ENCODE measurements at regions of chr20 and their contacts with region 1.

Region 1: GRCh38 chr20:32406701-32407100 is 48.6 kb downstream of the ASXL1 start:
- DNase-seq: no peak
- ATAC-seq: no peak
- H3K4me3 Mint-ChIP-seq: peak overlapping the region; percentile 48 to 89 (median 83)
- H3K27ac Mint-ChIP-seq: peak overlapping the region; percentile 80 to 98 (median 95)
- H3K4me1 Mint-ChIP-seq: peaks cover 26 to 70% (median 59%) of the 10 kb centered on the region in 4 donors
- H3K27me3 Mint-ChIP-seq: no peaks in the 10 kb centered on the region

Region 2: GRCh38 chr20:32357869-32358631 is 48.7 kb before region 1 on chr20 and contains the start of gene ASXL1:
- POLR2A ChIA-PET with region 1: interaction called, 23 read pairs
- DNase-seq: peak; percentile 86 to 95 (median 92)
- ATAC-seq: peak; percentile 91 to 92
- H3K4me3 Mint-ChIP-seq: peak within 1 kb of the TSS; percentile 87 to 98 (median 96)
- H3K27ac Mint-ChIP-seq: peak within 1 kb of the TSS; percentile 94 to 100 (median 99)
- H3K4me1 Mint-ChIP-seq: peaks cover 16 to 53% (median 46%) of the 10 kb centered on the region in 4 donors
- H3K27me3 Mint-ChIP-seq: no peaks in the 10 kb centered on the region
- polyA plus RNA-seq, gene ASXL1: 15.2 to 20.1 (median 18.4) TPM

Measured in naive thymus-derived CD8-positive, alpha-beta T cell (primary cell).